IMR-90 (cell line): ENCODE measurements at regions of chr2 and their contacts with region 1.

Region 1: DNA sequence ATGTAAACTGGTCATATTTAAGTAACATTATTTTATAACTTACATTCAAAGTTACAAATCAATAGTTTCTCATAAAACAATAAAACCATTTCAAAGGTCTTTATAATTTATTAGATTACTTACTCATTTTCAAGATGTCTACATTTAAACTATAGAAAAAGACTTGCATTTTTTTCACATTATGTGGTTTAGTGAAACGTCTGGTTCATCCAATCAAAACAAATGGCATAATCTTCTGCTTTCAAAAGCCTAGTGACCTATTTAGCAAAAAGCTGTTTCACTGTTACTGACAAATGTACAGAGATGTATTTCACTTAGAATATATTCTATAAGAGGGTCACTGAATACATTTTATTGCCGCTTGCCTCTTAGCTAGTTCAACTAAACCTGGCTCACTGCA is 49.3 kb upstream of the MCM6 start:
- DNase-seq: peak; percentile 74
- ATAC-seq: peak; percentile 79
- H3K4me3 ChIP-seq: no peak overlapping the region
- H3K27ac ChIP-seq: no peak overlapping the region
- H3K4me1 ChIP-seq: peaks cover 2% of the 10 kb centered on the region; the same call in 1 of the 2 replicates
- H3K27me3 ChIP-seq: no peaks in the 10 kb centered on the region
- CTCF ChIP-seq: no peak
- POLR2A ChIP-seq: no peak
- RAD21 ChIP-seq: no peak

Region 2: GRCh38 chr2:135785032-135785431 is 140.5 kb before region 1 on chr2:
- CTCF ChIA-PET with region 1: no interaction called
- POLR2A ChIA-PET with region 1: no interaction called
- dilution Hi-C with region 1: no loop called
- in situ Hi-C with region 1: no loop called
- intact Hi-C with region 1: no loop called
- DNase-seq: no peak
- ATAC-seq: no peak
- H3K4me3 ChIP-seq: no peak overlapping the region
- H3K27ac ChIP-seq: no peak overlapping the region
- H3K4me1 ChIP-seq: peaks cover 7% of the 10 kb centered on the region
- H3K27me3 ChIP-seq: no peaks in the 10 kb centered on the region
- CTCF ChIP-seq: no peak
- POLR2A ChIP-seq: no peak
- RAD21 ChIP-seq: no peak

Region 3: GRCh38 chr2:135863233-135863632 is 62.3 kb before region 1 on chr2:
- CTCF ChIA-PET with region 1: no interaction called
- POLR2A ChIA-PET with region 1: no interaction called
- dilution Hi-C with region 1: no loop called
- in situ Hi-C with region 1: no loop called
- intact Hi-C with region 1: no loop called
- DNase-seq: no peak
- ATAC-seq: peak; percentile 32; the same call in 1 of the 2 replicates
- H3K4me3 ChIP-seq: no peak overlapping the region
- H3K27ac ChIP-seq: no peak overlapping the region
- H3K4me1 ChIP-seq: no peaks in the 10 kb centered on the region
- H3K27me3 ChIP-seq: no peaks in the 10 kb centered on the region
- CTCF ChIP-seq: no peak
- POLR2A ChIP-seq: no peak
- RAD21 ChIP-seq: no peak

Region 4: GRCh38 chr2:135948642-135949355 is 23.2 kb after region 1 on chr2:
- CTCF ChIA-PET with region 1: no interaction called
- POLR2A ChIA-PET with region 1: no interaction called
- dilution Hi-C with region 1: no loop called
- in situ Hi-C with region 1: no loop called
- intact Hi-C with region 1: loop called (anchors 1 kb)
- DNase-seq: peak; percentile 83
- ATAC-seq: peak; percentile 49; the same call in 1 of the 2 replicates
- H3K4me3 ChIP-seq: no peak overlapping the region
- H3K27ac ChIP-seq: no peak overlapping the region
- H3K4me1 ChIP-seq: no peaks in the 10 kb centered on the region
- H3K27me3 ChIP-seq: no peaks in the 10 kb centered on the region
- CTCF ChIP-seq: no peak
- POLR2A ChIP-seq: no peak
- RAD21 ChIP-seq: no peak

Region 5: GRCh38 chr2:136129601-136130000 is 204.0 kb after region 1 on chr2:
- CTCF ChIA-PET with region 1: no interaction called
- POLR2A ChIA-PET with region 1: no interaction called
- dilution Hi-C with region 1: no loop called
- in situ Hi-C with region 1: no loop called
- intact Hi-C with region 1: loop called (anchors 10 kb)
- DNase-seq: no peak
- ATAC-seq: no peak
- H3K4me3 ChIP-seq: no peak overlapping the region
- H3K27ac ChIP-seq: no peak overlapping the region
- H3K4me1 ChIP-seq: no peaks in the 10 kb centered on the region
- H3K27me3 ChIP-seq: peaks cover 11% of the 10 kb centered on the region
- CTCF ChIP-seq: no peak
- POLR2A ChIP-seq: no peak
- RAD21 ChIP-seq: no peak